ENCODE measurements at regions of chr3 and their contacts with region 1.

Region 1: GRCh38 chr3:192444096-192444790 is 283.1 kb downstream of the FGF12 start:
- DNase-seq: peak; percentile 78
- H3K4me3 ChIP-seq: no peak overlapping the region
- H3K27ac ChIP-seq: no peak overlapping the region
- H3K4me1 ChIP-seq: peaks cover 3% of the 10 kb centered on the region
- H3K27me3 ChIP-seq: peaks cover 15 to 35% of the 10 kb centered on the region in 2 experiments
- CTCF ChIP-seq: peak; percentile 96
- POLR2A ChIP-seq: no peak

Region 2: DNA sequence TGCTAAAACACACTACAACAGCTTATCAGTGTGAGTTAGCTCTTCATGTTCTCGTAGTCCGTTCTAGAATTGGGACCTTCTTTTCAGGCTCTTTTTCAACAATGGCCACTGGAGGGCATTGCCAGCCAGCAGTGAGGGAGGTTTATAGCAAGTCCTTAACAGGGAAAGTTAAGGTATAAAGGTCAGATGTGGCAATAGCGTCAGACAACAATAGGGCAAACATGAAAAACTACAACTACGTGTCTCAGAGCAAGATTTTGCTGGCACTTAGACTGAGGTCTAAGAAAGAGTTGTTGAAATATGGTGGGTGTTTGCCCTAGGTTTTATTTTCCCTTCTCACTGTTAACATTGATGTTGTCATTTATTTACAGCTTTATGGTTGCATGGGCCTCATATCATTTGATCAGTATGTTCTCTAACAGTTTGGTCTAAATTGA is 1743.1 kb before region 1 on chr3:
- CTCF ChIA-PET with region 1: interaction called, 11 read pairs
- POLR2A ChIA-PET with region 1: no interaction called
- dilution Hi-C with region 1: no loop called
- intact Hi-C with region 1: no loop called
- DNase-seq: peak; percentile 37
- H3K4me3 ChIP-seq: no peak overlapping the region
- H3K27ac ChIP-seq: no peak overlapping the region
- H3K4me1 ChIP-seq: no peaks in the 10 kb centered on the region
- H3K27me3 ChIP-seq: peaks cover 0 to 2% of the 10 kb centered on the region in 2 experiments
- CTCF ChIP-seq: peak; percentile 24 to 46
- POLR2A ChIP-seq: no peak

Region 3: GRCh38 chr3:191136347-191136746 is 1307.9 kb before region 1 on chr3:
- CTCF ChIA-PET with region 1: interaction called, 11 read pairs
- POLR2A ChIA-PET with region 1: no interaction called
- dilution Hi-C with region 1: no loop called
- intact Hi-C with region 1: loop called (anchors 5 kb)
- DNase-seq: peak; percentile 63
- H3K4me3 ChIP-seq: no peak overlapping the region
- H3K27ac ChIP-seq: no peak overlapping the region
- H3K4me1 ChIP-seq: peaks cover 5% of the 10 kb centered on the region
- H3K27me3 ChIP-seq: no peaks in the 10 kb centered on the region
- CTCF ChIP-seq: peak; percentile 30 to 37
- POLR2A ChIP-seq: no peak

Region 4: GRCh38 chr3:191425322-191425734 is 1018.9 kb before region 1 on chr3:
- CTCF ChIA-PET with region 1: interaction called, 20 read pairs
- POLR2A ChIA-PET with region 1: no interaction called
- dilution Hi-C with region 1: no loop called
- intact Hi-C with region 1: no loop called
- DNase-seq: no peak
- H3K4me3 ChIP-seq: no peak overlapping the region
- H3K27ac ChIP-seq: no peak overlapping the region
- H3K4me1 ChIP-seq: no peaks in the 10 kb centered on the region
- H3K27me3 ChIP-seq: peaks cover 2 to 4% of the 10 kb centered on the region in 2 experiments
- CTCF ChIP-seq: no peak
- POLR2A ChIP-seq: no peak

Region 5: DNA sequence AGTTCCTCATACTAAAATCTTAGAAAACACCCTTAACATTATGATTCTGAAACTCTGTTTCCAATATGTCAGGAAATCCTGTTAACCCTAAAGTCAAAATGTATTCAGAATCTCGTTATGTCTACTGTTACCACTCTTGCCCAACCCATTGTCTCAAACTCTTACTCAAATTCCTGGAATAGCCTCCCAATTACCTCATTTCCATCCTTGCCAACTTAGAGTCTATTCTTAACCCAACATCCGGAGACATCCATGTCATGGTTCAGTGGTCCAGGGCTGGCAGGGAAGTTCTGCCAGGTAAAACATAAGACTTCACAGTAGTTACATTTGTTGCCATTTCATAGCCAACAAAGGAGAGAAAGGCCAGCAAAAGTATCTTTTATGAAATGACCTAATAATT is 389.4 kb before region 1 on chr3:
- CTCF ChIA-PET with region 1: interaction called, 3 read pairs
- POLR2A ChIA-PET with region 1: no interaction called
- dilution Hi-C with region 1: no loop called
- intact Hi-C with region 1: loop called (anchors 1 kb)
- DNase-seq: peak; percentile 85
- H3K4me3 ChIP-seq: peak overlapping the region in 1 of 3 experiments; percentile 9
- H3K27ac ChIP-seq: peak overlapping the region; percentile 85
- H3K4me1 ChIP-seq: peaks cover 27% of the 10 kb centered on the region
- H3K27me3 ChIP-seq: no peaks in the 10 kb centered on the region
- CTCF ChIP-seq: no peak
- POLR2A ChIP-seq: no peak

Region 6: GRCh38 chr3:192188218-192188835 is 255.9 kb before region 1 on chr3:
- CTCF ChIA-PET with region 1: interaction called, 101 read pairs
- POLR2A ChIA-PET with region 1: no interaction called
- dilution Hi-C with region 1: no loop called
- intact Hi-C with region 1: loop called (anchors 1 kb)
- DNase-seq: peak; percentile 46
- H3K4me3 ChIP-seq: no peak overlapping the region
- H3K27ac ChIP-seq: no peak overlapping the region
- H3K4me1 ChIP-seq: peaks cover 13% of the 10 kb centered on the region
- H3K27me3 ChIP-seq: no peaks in the 10 kb centered on the region
- CTCF ChIP-seq: peak; percentile 72 to 73
- POLR2A ChIP-seq: no peak

Region 7: DNA sequence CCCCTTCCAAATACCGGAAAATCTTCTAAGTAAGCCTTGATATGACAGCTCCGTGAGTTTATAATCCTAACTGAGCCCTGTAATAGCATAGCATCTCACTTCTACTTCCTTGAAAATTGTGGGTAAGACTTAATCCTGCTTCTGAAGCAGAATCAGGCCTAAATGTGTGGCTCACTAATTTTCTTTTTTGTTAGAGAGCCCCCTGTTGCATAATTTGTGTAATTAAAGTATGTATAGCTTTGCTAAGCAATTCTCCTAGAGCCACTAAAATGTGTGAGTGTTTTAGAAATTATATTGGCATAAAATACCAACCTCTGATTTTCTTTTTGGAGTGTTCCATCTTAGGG is 21.3 kb before region 1 on chr3:
- CTCF ChIA-PET with region 1: interaction called, 59 read pairs
- POLR2A ChIA-PET with region 1: no interaction called
- dilution Hi-C with region 1: no loop called
- intact Hi-C with region 1: no loop called
- DNase-seq: peak; percentile 50
- H3K4me3 ChIP-seq: no peak overlapping the region
- H3K27ac ChIP-seq: no peak overlapping the region
- H3K4me1 ChIP-seq: peaks cover 8% of the 10 kb centered on the region
- H3K27me3 ChIP-seq: peaks cover 0 to 2% of the 10 kb centered on the region in 2 experiments
- CTCF ChIP-seq: peak in 1 of 2 donors; percentile 10
- POLR2A ChIP-seq: no peak

Region 8: DNA sequence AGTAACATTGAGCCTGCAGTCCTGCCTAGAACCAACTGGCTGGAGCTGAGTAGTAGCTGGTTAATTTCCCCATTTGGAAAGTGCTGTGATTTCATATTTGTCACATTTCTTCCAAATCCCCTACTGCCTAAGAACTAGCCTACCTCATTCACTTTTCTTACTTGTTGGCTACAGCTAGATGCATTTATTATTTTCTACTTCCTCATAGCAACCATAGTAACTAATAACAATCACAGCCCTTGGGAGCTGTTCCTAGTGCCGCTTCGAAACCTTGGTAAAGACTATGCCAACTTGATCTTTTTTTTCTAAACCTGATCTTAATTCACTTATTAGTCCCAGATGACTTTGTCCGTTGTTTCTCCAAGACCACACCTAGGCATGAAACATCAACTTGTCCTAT is 42.8 kb after region 1 on chr3:
- CTCF ChIA-PET with region 1: no interaction called
- POLR2A ChIA-PET with region 1: no interaction called
- dilution Hi-C with region 1: no loop called
- intact Hi-C with region 1: no loop called
- DNase-seq: no peak
- H3K4me3 ChIP-seq: no peak overlapping the region
- H3K27ac ChIP-seq: no peak overlapping the region
- H3K4me1 ChIP-seq: peaks cover 9% of the 10 kb centered on the region
- H3K27me3 ChIP-seq: peaks cover 2% of the 10 kb centered on the region in 2 experiments
- CTCF ChIP-seq: no peak
- POLR2A ChIP-seq: no peak